ENCODE measurements at regions of chr10 and their contacts with region 1.

Region 1: DNA sequence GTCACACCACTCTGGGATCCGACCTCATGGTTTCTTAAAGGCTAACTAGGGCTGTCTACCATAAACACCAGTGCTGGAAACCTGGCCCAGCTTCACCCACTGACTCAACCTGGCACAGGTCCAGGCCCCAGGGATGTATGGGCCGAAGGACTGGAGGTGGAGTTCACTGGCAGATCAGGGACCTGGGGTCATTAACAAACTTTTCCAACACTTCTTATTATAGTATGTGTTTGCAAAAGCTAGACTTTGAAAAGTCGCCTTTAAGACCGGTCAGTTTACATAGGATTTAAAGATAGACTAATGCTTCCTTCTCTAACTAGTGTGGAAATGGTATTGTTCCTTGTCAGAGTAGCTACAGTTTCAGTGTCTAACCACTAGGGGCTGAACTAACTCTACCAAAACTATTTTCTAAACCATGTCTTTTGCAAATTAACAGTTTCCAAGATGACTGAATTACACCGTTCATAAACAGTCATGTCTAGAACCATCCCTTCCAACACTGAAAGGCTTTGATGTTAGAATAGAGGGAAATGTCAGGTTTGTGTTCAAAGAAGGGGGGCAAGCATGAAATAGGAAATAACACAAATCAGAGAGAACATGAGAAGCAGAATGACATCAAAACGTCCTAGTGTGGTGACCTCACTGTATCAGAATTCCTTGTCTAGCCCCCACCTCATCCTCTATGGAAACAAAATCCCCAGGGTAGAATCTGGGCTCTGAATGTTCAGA is 29.7 kb downstream of the STN1 start:
- DNase-seq: peak; percentile 70
- H3K4me3 Mint-ChIP-seq: no peak overlapping the region
- H3K27ac Mint-ChIP-seq: peak overlapping the region; percentile 76
- H3K4me1 Mint-ChIP-seq: peaks cover 28% of the 10 kb centered on the region
- H3K27me3 Mint-ChIP-seq: no peaks in the 10 kb centered on the region

Region 2: DNA sequence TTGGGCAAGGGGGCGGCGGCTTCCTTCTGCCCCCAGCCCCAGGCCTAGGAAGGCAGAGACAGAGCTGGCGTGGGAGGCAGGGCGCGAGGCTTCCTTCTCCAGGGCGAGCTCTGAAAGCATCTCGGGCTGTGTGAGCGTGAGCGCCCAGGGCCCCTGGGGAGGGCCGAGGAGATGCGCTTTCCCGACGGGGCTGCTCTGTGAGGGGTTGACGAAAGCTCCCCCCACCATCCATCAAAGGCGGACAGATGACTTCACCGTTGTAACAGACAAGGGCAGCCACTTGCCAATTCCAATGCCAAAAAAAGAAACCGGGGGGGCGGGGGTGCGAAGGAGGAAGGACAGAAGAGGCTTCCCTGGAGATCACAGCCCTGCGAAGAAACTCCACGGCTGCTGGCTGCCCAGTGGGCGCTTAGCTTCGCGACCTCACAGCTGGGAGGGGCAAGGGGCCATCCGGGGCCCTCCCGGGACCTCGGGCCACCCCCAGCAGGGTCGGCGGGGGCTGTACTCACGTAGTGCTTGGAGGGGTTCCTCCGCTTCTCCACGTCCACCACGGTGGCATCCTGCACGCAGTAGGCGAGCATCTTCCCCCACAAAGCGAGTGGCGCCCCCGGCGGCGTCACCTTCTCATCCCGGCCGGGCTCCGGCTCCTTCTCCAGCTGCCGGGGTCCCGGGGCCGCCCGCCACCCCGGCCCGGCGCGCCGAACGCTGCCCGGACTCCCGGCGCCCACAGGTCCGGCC is 33.4 kb before region 1 on chr10:
- intact Hi-C with region 1: no loop called
- DNase-seq: peak; percentile 64
- H3K4me3 Mint-ChIP-seq: peak overlapping the region; percentile 86
- H3K27ac Mint-ChIP-seq: no peak overlapping the region
- H3K4me1 Mint-ChIP-seq: peaks cover 11% of the 10 kb centered on the region
- H3K27me3 Mint-ChIP-seq: peaks cover 76% of the 10 kb centered on the region

Region 3: GRCh38 chr10:103911021-103911459 is 22.8 kb after region 1 on chr10:
- intact Hi-C with region 1: loop called (anchors 1 kb)
- DNase-seq: peak; percentile 91
- H3K4me3 Mint-ChIP-seq: peak overlapping the region; percentile 72
- H3K27ac Mint-ChIP-seq: peak overlapping the region; percentile 94
- H3K4me1 Mint-ChIP-seq: peaks cover 59% of the 10 kb centered on the region
- H3K27me3 Mint-ChIP-seq: no peaks in the 10 kb centered on the region

Region 4: DNA sequence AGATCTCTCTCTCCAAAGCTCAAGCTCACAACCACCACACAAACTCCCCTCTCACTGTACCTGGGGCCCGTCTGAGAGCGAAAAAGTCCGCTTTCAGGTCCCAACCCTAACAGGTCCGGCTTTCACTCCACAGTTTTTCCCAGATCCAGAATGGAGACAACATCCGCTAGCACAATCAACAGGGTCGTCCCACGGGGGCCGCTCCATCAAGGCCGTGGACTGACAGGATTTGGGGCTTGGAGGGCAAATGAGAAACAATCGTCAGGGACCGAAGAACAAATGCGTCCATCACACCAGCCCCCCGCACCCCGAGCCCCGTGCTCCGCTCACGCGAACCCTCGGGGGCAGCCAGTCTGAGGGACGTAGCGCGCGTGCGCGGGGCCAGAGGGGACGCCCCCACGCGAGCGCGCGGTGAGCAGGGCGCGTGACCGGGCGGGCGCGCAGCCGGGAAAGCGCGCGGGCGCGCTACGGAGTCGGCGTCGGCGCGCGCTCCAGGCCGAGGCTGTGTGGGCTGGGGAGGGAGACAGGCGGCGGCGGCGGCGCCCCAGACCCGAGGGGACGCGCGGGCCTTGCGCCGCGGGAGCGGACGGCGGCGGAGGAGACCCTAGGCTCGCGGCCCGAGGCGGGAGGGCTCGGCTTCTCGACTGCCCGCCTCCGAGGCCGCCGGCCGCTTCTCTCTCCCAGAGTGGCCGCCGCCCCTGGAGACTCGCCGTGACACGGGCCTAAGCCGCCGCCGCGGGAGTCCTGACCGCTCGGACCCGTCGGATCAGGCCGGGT is 78.6 kb after region 1 on chr10 and contains the start of gene SLK:
- intact Hi-C with region 1: loop called (anchors 2 kb)
- DNase-seq: peak; percentile 96
- H3K4me3 Mint-ChIP-seq: peak within 1 kb of the TSS; percentile 97
- H3K27ac Mint-ChIP-seq: peak within 1 kb of the TSS; percentile 93
- H3K4me1 Mint-ChIP-seq: peaks cover 32% of the 10 kb centered on the region
- H3K27me3 Mint-ChIP-seq: no peaks in the 10 kb centered on the region
- total RNA-seq, gene SLK: 22.9 and 27.1 TPM in 2 replicates

Region 5: GRCh38 chr10:104016661-104017060 is 128.4 kb after region 1 on chr10:
- intact Hi-C with region 1: loop called (anchors 10 kb)
- DNase-seq: no peak
- H3K4me3 Mint-ChIP-seq: no peak overlapping the region
- H3K27ac Mint-ChIP-seq: no peak overlapping the region
- H3K4me1 Mint-ChIP-seq: no peaks in the 10 kb centered on the region
- H3K27me3 Mint-ChIP-seq: no peaks in the 10 kb centered on the region

Region 6: DNA sequence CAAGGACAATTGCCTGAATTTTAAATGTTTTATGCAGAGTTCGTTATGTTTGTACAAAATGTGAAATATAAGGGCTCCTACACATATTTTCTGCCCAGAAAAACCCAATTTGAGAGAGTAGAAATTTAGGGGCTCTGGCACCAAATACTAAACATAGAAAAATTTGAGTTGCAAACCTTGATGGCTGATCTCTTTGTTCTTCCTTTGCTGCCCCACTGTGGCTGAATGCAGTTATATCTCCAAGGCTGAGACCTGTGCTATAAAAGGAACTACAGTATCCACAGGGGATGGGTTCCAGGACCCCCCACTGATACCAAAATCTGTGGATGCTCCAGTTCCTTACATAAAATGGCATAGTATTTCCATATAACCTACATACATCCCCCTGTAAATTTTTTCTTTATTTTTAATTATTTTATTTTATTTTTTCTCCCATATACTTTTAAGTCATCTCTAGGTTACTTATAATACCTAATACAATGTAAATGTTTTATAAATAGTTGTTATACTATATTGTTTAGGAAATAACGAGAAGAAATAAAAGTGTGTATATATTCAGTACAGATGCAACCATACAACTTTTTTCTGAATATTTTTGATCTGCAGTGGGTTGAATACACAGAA is 321.4 kb after region 1 on chr10:
- intact Hi-C with region 1: loop called (anchors 1 kb)
- DNase-seq: peak; percentile 78
- H3K4me3 Mint-ChIP-seq: no peak overlapping the region
- H3K27ac Mint-ChIP-seq: no peak overlapping the region
- H3K4me1 Mint-ChIP-seq: no peaks in the 10 kb centered on the region
- H3K27me3 Mint-ChIP-seq: peaks cover 49% of the 10 kb centered on the region